Activated naive CD4-positive, alpha-beta T cell treated with anti-CD3 and anti-CD28 coated beads, Interleukin-2, amount 10 ng/mL, durations not matched to agents 7 days and 5 days (primary cell): ENCODE measurements at regions of chr2 and their contacts with region 1.

Region 1: DNA sequence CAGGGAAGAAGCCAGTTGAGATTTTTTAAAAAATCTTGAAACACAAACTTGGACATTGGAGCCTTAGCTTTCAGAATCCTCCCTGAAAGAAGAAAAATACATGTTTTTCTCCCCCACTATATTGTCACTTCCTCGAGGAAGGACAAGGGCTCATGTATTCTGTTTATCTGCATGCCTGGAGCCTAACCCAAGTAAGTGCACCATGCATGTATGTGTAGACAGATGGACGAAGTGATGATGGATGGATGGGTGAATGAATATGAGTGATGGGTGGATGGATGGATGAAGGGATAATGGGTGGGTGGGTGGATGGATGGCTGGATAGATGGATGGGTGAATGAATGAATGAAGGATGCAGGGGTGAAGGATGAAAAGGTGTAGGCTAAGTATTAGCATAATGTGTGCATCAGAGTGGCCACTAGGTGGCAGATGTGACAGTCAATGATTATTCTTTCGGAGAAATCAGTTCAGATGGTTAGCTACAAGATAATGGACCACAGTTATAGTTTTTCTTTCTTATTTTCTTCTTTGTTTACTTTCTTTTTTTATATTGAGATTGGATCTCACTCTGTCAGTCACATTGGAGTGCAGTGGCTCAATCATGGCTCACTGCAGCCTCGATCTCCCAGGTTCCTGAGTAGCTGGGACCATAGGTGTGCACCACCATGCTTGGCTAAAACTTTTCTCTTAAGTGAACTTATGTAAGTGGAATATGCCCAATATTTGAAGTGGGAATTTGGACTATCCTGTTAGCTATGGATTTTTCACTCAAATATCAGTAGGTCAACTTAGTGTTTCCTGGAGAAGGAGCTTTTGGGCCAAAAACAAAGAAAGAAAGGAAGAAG is 18.5 kb upstream of the CCDC93 start:
- DNase-seq: peak; percentile 56
- H3K4me3 Mint-ChIP-seq: no peak overlapping the region
- H3K27ac Mint-ChIP-seq: no peak overlapping the region
- H3K4me1 Mint-ChIP-seq: no peaks in the 10 kb centered on the region
- H3K27me3 Mint-ChIP-seq: peaks cover 40% of the 10 kb centered on the region

Region 2: DNA sequence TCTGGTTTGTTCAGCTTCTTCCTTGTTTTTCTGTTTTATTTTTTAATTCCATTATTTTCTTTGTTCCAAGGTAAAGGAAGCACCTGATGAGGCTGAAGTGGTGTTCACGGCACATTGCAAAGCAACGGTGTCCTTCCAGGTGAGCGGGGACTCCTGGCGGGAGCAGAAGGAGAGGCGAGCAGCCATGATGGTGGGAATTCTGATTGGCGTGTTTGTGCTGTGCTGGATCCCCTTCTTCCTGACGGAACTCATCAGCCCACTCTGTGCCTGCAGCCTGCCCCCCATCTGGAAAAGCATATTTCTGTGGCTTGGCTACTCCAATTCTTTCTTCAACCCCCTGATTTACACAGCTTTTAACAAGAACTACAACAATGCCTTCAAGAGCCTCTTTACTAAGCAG is 129.5 kb before region 1 on chr2:
- CTCF ChIA-PET with region 1: no interaction called
- DNase-seq: no peak
- H3K4me3 Mint-ChIP-seq: no peak overlapping the region
- H3K27ac Mint-ChIP-seq: no peak overlapping the region
- H3K4me1 Mint-ChIP-seq: no peaks in the 10 kb centered on the region
- H3K27me3 Mint-ChIP-seq: no peaks in the 10 kb centered on the region

Region 3: DNA sequence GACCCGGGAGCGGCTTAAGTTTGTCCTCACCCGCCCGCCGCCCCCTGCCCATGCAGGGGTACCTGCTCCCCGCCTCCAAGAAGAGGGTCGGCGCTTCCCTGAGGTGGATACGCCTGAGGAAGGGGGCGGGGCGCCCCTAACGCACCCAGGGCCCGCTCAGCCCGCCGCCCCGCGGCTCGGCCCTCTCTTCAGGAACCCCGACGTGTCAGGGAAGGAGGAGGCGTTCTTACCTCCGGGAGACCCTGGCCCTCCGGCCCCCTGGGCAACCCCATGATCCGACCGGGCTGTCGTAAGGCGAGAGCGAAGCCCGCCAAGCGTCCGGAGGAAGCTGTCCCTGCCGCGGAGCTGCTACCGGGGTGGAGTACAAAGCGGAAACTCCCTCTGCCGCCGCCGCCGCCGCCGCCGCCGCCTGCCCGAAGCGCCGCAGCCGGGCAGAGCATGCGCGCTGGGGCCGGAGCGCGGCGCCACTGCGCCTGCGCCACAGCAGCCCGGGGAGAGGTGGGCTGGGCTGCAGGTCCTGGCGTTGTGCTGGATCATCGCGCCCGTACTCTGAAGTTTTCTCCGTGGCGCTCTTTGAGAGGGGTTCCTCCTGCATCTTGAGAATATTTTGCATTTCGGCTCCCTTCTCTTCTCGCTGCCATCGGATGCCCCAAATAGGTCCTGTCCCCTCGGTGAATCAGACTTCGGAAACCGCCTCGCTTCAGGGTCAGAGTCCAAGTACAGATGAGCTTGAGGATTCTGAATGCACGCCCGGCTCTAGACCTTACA is 18.5 kb before region 1 on chr2 and contains the start of gene CCDC93:
- CTCF ChIA-PET with region 1: interaction called, 15 read pairs
- DNase-seq: peak; percentile 89
- H3K4me3 Mint-ChIP-seq: peak within 1 kb of the TSS; percentile 84
- H3K27ac Mint-ChIP-seq: peak within 1 kb of the TSS; percentile 87
- H3K4me1 Mint-ChIP-seq: peaks cover 45% of the 10 kb centered on the region
- H3K27me3 Mint-ChIP-seq: no peaks in the 10 kb centered on the region

Region 4: GRCh38 chr2:118046634-118047210 is 14.3 kb after region 1 on chr2:
- CTCF ChIA-PET with region 1: interaction called, 11 read pairs
- DNase-seq: no peak
- H3K4me3 Mint-ChIP-seq: no peak overlapping the region
- H3K27ac Mint-ChIP-seq: no peak overlapping the region
- H3K4me1 Mint-ChIP-seq: no peaks in the 10 kb centered on the region
- H3K27me3 Mint-ChIP-seq: peaks cover 34% of the 10 kb centered on the region

Region 5: DNA sequence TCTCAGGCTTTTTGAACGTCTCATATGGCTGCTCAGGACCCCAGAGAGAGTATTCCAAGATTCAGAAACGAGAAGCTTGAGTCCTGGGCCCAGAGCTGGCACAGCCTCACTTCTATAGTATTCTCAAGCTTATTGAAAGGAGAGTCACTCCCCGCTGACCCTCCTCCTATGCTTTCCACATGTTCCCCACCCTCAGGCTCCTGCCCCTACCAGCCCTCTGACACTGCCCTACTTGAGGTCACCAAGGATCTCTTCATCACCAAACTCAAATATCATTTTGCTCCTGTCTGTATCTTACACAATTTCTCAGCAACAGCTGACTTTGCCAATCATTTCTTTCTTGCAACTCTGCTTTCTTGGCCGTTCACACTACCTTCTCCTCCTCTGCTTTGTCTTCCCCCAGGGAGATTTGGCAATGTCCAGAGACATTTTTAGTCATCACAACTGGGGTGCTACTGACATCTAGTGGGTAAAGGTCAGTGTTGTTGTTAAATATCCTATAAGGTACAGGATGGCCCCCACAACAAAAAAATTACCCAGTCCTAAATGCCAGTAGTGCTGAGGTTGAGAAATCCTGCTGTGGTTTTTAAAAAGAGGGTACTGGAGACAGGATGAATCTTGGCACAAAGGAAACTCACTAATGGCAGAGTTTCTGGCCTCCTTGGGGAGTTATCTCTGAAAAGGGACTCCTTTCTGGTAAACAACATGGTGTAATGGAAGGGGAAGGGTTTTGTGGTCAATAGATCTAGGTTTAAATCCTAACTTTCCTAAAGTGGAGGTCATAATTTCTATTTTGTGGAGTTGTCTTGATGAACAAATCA is 29.0 kb after region 1 on chr2:
- CTCF ChIA-PET with region 1: interaction called, 21 read pairs
- DNase-seq: no peak
- H3K4me3 Mint-ChIP-seq: no peak overlapping the region
- H3K27ac Mint-ChIP-seq: no peak overlapping the region
- H3K4me1 Mint-ChIP-seq: peaks cover 5% of the 10 kb centered on the region
- H3K27me3 Mint-ChIP-seq: peaks cover 27% of the 10 kb centered on the region